Posterior vena cava (tissue), 2 donors: ENCODE measurements at regions of chr22 and their contacts with region 1.

Region 1: DNA sequence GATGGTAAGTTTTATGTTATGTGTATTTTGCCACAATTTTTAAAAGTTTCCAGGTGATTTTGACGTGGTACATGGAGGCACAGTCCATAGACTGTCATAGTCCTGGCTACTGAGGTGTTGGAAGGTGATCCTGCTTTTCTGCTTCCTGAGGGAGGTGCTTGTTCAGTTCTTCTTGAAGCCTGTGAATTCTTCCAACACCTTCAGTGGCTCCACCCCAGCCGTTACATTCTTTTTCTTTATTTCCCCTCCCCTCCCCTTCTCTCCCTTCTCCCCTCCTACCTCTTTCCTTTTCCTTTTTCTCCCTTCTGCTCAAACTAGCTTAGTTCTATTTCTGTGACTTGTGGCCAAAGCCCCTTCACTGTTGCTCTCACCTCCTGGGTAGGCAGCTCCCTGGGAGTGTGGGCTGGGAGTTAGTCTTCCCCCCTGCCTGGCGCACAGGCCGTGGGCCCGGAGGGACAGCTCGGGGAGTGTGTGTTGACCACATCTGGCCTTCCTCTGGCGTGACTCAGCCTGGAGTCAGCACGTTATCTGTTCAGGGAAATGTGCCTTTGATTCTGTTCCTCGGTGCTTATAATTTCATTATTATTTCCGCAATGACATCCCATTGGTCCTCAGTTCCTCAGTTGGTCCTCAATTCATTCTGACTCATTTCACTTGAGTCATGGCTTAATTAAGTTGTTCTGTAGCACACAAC is 566.2 kb downstream of the TBC1D22A start:
- DNase-seq: no peak

Region 2: GRCh38 chr22:45934659-45935341 is 1393.9 kb before region 1 on chr22:
- intact Hi-C with region 1: loop called in 1 of 2 experiments (anchors 5 kb)
- DNase-seq: no peak

Region 3: DNA sequence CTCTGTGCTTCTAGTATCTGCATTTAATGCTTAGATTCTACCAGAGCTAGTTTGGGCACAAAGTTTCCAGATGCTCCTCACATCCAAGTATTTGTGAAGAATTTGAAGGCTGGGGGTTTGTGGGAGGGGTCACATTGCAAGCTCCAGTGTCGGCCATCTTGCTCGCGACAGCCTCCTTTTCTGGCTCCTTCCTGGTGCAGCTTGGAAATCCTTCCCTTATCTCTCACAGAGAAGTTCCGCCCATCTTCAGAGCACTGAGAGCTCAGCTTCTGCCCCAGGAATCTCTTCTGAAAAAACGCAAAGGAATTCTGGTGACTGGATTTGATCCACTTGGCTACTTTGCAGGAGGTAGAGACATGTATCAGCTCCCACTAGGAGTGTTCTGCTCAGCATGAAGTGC is 68.7 kb before region 1 on chr22:
- intact Hi-C with region 1: no loop called
- DNase-seq: no peak

Region 4: GRCh38 chr22:47307326-47307725 is 21.4 kb before region 1 on chr22:
- intact Hi-C with region 1: no loop called
- DNase-seq: no peak

Region 5: GRCh38 chr22:47370448-47371262 is 42.0 kb after region 1 on chr22:
- intact Hi-C with region 1: no loop called
- DNase-seq: peak; percentile 71